Left ventricle myocardium superior (tissue), 1 donor: ENCODE measurements at regions of chr20 and their contacts with region 1.

Region 1: GRCh38 chr20:44747166-44748004 is 1.7 kb downstream of the KCNK15 start:
- DNase-seq: peak; percentile 71
- ATAC-seq: peak; percentile 49

Region 2: GRCh38 chr20:43789593-43789992 is 957.8 kb before region 1 on chr20:
- intact Hi-C with region 1: no loop called
- DNase-seq: no peak
- ATAC-seq: no peak

Region 3: GRCh38 chr20:44370639-44371220 is 376.7 kb before region 1 on chr20:
- intact Hi-C with region 1: no loop called
- DNase-seq: no peak
- ATAC-seq: no peak

Region 4: DNA sequence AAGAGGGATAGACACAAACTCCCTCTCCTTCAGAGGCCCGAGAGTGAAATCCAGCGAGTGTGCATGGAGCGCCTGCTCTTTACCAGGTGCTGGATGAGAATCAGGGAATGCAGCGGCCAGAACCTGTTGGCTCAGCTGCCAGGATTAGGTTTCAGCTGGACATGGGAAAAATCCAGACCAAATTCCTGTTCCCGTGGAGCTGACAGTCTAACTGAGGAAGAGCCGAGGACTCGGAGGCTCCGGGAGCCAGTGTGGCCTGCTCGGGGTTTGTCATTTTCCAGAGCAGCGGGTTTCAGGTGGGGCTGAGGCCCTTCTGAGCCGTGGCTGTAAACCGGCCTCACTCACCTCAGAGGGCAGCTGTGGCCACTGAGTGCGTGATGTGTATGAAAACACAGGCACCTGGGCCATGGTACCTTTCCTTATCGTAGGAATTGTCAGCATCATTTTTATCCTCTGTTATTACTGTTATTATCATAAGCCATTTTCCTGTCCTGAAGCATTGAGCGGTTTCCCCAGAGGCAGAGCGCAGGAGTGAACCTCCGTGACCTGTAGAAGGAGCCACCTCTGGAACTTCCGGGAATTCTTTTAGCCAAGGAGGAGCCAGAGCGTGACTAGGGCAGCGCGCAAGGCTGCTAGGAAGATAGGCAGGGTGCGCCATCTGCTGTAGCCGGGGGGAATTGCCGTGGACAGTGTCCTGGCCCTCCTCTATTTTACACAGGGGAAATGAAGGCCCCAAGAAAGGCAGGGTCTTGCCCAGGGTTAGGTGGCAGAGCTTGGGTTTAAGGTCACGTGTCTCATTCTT is 137.7 kb before region 1 on chr20:
- intact Hi-C with region 1: no loop called
- DNase-seq: peak; percentile 94
- ATAC-seq: peak; percentile 88

Region 5: GRCh38 chr20:44866703-44867335 is 119.4 kb after region 1 on chr20:
- intact Hi-C with region 1: loop called (anchors 5 kb)
- DNase-seq: no peak
- ATAC-seq: no peak